Astrocyte of the cerebellum (primary cell): ENCODE measurements at regions of chr15 and their contacts with region 1.

Region 1: GRCh38 chr15:44489464-44489863 is 47.5 kb upstream of the EIF3J start:
- DNase-seq: peak; percentile 72
- H3K4me3 ChIP-seq: no peak overlapping the region
- CTCF ChIP-seq: no peak

Region 2: GRCh38 chr15:44243829-44244228 is 245.6 kb before region 1 on chr15:
- in situ Hi-C with region 1: loop called (anchors 25 kb)
- DNase-seq: no peak
- H3K4me3 ChIP-seq: no peak overlapping the region
- CTCF ChIP-seq: peak; percentile 38

Region 3: DNA sequence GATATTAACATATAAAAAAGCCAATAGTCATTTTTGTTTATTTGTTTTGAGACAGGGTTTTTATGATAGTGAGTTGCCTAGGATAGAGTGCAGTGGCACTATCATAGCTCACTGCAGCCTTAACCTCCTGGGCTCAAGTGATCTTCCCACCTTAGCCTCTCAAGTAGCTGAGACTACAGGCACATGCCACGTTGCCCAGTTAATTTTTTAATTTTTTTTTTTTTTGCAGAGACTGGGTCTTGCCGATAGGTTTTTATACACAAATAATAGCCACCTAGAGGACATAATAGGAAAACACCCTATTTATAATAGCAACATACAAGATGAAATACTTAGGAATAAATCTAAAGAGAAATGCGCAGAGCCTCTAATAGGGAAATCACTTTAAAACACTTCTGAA is 60.8 kb after region 1 on chr15:
- in situ Hi-C with region 1: no loop called
- DNase-seq: peak; percentile 19
- H3K4me3 ChIP-seq: no peak overlapping the region
- CTCF ChIP-seq: peak; percentile 29